Posterior cingulate gyrus (tissue), 11 donors: ENCODE measurements at regions of chr2 and their contacts with region 1.

Region 1: DNA sequence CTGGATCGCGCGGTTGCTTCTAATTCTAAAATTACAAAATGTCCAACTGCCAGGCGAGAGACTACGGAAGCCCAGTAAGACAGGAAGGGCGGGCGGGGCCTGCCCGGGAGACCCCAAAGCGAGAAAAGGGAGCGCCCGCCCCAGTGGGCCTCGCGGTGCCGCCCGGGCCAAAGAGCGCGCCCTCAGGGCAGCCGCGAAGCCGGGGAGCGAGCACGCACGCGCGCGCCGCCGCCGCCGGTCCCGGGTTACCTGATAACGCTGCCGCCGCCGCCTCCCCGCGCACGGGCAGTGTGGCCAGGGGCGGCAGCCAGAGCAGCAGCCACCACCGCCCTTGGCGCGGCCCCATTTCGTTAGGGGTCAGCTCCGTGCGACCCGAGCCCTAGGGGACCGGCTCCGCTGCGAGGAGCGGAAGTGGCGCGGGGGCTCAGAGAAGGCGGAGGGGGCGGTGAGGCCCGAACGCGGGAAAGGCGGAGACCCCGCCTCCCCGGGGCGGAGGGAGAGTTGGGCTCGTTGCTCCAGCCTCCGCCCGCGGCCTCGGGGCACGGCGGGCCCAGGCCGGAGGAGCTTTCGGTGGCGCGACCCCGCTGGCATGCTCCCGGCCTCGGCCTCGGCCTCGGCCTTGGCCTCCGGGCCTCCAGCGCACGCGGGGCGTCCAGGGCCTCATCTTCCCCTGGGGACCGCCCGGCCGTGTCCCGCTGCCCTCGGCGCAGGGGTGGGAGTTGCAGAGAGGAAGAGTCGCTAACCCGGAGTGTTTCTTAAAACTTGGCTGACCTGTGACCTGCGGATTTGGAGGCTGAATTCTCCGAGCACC is at the start of gene NEMP2:
- DNase-seq: peak; percentile 44 to 96 (median 74)

Region 2: GRCh38 chr2:190126798-190127197 is 407.7 kb before region 1 on chr2:
- intact Hi-C with region 1: no loop called
- DNase-seq: no peak

Region 3: DNA sequence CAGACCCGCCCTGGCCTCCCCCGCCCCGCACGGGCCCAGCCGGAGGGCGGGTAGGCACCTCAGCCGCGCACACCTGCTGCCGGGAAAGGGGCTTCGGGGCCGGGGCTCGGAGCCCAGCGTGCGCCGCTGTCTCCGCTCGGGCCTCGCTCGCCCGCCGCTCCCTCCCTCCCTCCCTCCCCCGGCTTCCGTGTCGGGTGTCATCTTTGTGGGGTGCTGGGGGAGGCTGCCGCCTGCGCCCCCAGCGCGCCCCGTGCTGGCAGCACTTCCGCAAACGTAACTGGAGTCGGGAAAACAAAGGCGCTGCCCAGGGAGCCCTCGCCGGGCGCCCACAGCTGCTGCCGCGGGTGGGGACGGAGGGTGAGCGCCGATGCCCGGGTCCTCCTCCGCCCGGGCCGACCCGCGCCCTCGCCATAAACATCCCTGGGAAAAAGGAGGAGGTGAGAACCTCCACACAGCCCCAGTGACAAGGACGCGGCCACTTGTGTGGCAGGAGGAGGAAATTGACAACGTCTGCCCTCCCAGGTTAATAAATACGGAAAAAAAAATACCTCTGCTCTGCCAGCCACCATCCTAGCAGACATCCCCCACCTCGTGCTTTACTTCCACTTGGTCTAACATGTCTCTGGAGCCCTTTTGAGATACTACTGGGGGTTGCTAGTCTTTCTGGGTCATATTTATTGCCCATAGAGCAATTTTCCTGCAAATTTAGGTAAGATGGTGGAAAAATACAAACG is 125.8 kb before region 1 on chr2:
- intact Hi-C with region 1: no loop called
- DNase-seq: peak; percentile 65 to 97 (median 78)

Region 4: GRCh38 chr2:190607014-190607597 is 72.6 kb after region 1 on chr2:
- intact Hi-C with region 1: loop called (anchors 10 kb)
- DNase-seq: no peak

Region 5: DNA sequence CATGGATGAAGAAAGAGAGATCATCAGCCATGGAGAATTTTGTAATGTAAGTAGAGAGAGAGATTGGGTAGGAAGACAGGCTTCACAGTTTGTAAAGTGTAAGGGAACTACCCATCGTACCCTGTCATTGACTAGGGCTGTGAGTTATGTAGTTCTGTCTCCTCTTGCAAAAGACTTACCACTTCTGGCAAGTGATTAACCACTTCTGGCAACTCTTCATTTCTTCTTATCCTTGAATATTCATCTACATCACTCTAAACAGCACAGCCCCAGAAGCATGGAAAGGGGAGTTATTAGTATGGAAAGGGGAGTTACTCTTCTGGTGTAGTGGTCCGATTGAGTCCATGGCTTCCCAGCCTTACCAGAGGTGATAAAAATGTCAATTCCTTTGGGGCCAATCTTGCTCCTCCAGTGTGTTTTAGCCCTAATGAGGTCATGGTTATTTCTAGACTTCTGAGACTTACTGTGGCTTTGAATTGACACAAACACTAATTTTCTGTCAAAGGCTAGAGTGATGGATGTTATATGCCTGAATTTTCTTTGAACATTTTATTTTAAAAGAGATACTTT is 427.5 kb after region 1 on chr2:
- intact Hi-C with region 1: no loop called
- DNase-seq: no peak